Activated CD4-positive, alpha-beta T cell treated with anti-CD3 and anti-CD28 coated beads for 36 hours (primary cell): ENCODE measurements at regions of chr17 and their contacts with region 1.

Region 1: DNA sequence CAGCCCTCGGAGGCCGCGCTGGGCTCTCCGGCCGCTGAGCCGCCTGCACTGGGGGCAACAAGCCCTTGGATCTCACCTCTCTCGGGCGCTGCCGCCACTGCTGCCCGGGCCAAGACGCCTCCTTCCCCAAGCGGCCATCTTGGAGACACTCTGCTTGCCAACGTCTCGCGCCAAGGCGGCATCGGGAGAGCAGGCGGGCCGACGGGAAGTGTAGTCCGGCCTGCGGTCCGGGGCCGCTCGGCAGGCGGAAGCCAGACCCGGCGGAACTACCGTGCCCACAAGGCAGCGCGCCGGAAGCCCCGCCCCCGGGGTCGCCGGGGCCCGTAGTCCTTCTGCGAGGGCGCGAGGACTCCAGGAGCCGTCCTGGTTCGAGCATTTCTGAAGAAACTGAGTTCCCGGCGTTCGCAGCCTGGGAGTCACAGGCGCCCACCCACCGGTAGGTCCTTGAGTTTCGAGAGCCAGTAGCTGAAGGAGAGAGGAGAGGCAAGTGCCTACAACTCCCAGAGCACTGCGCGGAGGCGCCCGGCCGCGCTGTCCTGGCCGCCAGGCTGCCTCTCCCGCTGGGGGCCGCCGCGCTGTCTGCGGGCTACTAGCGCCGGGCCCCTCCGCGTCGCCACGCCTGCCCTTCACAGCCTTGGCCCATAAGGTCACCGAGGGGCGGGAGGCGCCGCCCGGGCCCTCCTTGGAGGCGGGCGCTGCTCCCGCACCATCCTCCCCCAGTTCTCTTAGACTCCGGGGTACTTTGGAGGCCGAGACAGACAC is at the start of gene TMEM11:
- DNase-seq: peak; percentile 98
- ATAC-seq: peak; percentile 96
- H3K4me3 Mint-ChIP-seq: peak within 1 kb of the TSS; percentile 82
- H3K27ac Mint-ChIP-seq: peak within 1 kb of the TSS; percentile 93
- H3K4me1 Mint-ChIP-seq: peaks cover 70% of the 10 kb centered on the region
- H3K27me3 Mint-ChIP-seq: no peaks in the 10 kb centered on the region
- total RNA-seq, gene TMEM11: 28.9 to 40.4 TPM

Region 2: GRCh38 chr17:21043286-21044232 is 170.6 kb before region 1 on chr17:
- CTCF ChIA-PET with region 1: no interaction called
- POLR2A ChIA-PET with region 1: interaction called, 3 read pairs
- intact Hi-C with region 1: loop called (anchors 1 kb)
- DNase-seq: peak; percentile 99
- ATAC-seq: peak; percentile 88
- H3K4me3 Mint-ChIP-seq: peak overlapping the region; percentile 76
- H3K27ac Mint-ChIP-seq: peak overlapping the region; percentile 95
- H3K4me1 Mint-ChIP-seq: peaks cover 21% of the 10 kb centered on the region
- H3K27me3 Mint-ChIP-seq: no peaks in the 10 kb centered on the region

Region 3: DNA sequence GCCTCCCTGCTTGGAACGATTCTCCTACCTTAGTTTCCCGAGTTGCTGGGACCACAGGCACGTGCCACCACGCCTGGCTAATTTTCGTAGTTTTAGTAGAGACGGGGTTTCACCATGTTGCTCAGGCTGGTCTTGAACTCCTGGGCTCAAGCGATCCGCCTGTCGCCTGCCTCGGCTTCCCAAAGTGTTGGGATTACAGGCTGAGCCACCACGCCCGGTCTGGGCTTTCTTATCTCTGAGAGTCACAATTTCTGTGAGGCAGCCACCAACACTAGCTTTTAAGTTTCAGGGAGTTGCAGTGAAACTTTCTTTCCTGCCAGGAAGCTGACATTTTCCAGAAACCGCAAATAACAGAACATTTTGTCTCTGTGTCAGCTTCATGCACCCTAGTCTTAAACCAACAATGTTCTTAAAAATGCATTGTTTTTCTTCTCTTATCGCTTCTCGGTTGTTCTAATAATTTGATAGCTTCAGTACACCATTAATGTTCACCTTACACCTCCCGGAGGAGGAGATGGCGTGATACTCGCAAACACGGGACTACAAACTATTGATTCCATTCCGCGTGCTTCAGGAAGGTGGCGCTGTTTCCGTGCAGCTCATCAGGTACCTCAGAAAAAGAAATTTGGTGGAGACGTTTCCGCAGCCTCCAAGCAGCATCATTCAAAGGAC is 94.8 kb before region 1 on chr17:
- CTCF ChIA-PET with region 1: interaction called, 6 read pairs
- POLR2A ChIA-PET with region 1: interaction called, 4 read pairs
- intact Hi-C with region 1: loop called (anchors 2 kb)
- DNase-seq: peak; percentile 83
- ATAC-seq: peak; percentile 95
- H3K4me3 Mint-ChIP-seq: peak overlapping the region; percentile 2
- H3K27ac Mint-ChIP-seq: peak overlapping the region; percentile 12
- H3K4me1 Mint-ChIP-seq: peaks cover 7% of the 10 kb centered on the region
- H3K27me3 Mint-ChIP-seq: peaks cover 2% of the 10 kb centered on the region

Region 4: DNA sequence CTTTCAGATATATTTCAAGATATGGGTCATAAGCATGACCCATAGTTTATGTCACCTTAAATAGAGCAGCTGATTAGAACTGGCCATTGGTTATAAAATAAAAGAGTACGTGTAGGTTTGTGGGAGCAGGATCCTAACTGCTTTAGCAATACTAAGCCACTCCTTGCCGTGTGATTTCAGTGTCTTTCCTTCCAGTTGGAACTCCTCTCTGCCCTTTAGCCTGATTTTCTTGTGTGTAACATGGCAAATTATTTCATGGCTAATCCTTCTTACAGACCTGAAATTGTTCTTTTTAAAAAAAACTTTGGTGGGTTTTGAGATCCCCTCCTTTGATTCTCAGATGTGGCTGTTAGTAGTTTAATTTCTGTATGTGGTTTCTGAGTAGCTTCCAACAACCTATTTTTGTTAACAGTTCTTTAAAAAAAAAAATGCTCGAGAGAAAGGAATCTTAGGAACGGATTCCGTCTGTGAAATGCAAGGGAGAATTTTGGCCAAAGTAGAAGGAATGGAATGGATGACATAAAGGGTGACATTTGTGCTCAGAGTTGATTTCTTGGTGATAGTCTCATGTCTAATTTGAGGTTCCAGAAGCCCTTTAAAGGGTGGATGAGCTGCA is 47.5 kb before region 1 on chr17:
- CTCF ChIA-PET with region 1: no interaction called
- POLR2A ChIA-PET with region 1: no interaction called
- intact Hi-C with region 1: loop called in 1 of 2 experiments (anchors 5 kb)
- DNase-seq: no peak
- ATAC-seq: no peak
- H3K4me3 Mint-ChIP-seq: no peak overlapping the region
- H3K27ac Mint-ChIP-seq: no peak overlapping the region
- H3K4me1 Mint-ChIP-seq: peaks cover 23% of the 10 kb centered on the region
- H3K27me3 Mint-ChIP-seq: no peaks in the 10 kb centered on the region

Region 5: DNA sequence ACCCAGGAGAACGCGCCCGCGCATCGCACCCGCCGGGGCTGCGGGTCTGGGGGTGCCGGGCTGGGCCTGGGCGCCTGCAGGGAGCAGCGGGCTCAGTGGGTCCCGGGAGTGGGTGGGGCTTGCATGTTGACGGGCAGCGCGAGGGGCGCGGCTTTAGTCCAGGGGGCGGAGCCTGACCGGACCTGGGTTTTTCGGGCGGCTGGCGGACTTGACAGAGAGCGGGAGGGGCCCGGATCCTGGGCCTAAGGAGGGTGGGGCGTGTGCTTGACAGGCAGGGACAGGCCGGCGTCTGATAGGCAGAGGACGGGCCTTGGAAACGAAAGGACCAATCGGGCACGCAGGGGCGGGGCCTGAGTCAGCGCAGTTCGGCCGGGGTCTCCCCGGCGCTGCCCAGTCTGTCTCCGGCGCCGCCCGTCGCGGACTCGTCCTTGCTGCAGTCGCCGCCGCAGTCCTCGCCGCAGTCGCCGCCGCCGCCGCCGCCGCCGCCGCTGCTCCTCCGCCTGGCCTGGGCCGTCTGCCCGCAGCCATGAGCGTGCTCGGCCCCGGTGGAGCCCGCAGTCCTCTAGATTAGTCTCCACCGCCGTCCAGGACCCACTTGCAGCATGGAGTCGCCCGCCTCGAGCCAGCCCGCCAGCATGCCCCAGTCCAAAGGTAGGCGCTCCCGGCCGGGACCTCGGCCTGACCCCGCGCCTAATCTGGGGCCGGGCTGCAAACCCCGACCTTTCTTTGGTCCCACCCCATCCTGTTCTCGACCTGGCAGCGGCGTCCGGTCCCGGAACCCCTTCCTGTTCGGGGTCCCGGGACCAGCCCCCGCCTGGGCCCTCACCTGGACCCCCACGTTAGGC is 70.3 kb after region 1 on chr17 and contains the start of gene MAP2K3:
- CTCF ChIA-PET with region 1: interaction called, 3 read pairs
- POLR2A ChIA-PET with region 1: no interaction called
- intact Hi-C with region 1: loop called (anchors 1 kb)
- DNase-seq: peak; percentile 99
- ATAC-seq: peak; percentile 76
- H3K4me3 Mint-ChIP-seq: peak within 1 kb of the TSS; percentile 98
- H3K27ac Mint-ChIP-seq: peak within 1 kb of the TSS; percentile 94
- H3K4me1 Mint-ChIP-seq: peaks cover 57% of the 10 kb centered on the region
- H3K27me3 Mint-ChIP-seq: no peaks in the 10 kb centered on the region
- total RNA-seq, gene MAP2K3: 122 to 123 TPM

Region 6: DNA sequence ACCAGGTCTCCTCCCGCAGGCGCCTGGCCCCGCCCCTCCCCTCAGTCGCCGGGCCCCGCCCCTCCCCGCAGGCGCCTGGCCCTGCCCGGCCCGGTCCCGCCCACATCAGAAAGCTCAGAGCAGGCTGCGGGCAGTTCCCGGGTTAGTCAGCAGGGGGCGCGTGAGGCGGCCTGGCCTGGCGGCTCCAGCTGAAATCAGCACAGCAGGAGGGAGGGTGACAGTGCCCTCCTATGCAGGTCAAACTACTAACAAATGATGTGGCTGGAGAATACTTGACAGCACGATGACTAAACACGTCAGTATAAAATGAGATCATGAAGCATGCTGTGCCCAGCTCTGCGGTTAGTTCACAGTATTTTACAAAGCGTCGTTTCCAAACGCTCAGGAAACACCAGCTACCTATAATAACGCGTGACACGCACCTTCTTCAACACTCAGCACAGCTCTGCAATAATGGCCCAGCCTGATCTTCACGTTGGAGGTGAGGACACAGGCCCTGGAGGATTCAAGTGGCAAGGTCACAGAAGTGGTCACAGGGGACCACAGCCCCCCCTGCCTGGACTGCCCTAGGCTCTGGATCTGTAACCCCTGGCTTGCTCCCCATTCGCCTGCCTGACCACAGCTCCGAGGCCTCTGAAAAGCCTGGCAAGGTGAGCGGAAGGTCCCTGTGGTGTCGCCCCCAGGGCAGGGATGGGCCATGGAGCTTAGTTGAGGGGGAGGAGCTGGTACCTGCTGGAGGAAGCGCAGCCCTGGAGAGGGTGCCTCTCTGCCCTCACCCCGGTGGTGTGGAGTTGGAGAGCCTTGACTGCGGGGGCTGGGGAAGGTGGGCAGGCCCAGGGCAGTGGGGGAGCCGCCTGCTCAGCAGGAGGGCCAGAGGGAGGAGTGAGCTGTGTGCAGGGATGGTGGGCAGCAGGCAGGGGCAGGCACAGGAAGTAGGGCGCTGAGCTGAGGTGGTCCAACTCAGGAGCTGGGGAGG is 243.1 kb after region 1 on chr17:
- CTCF ChIA-PET with region 1: no interaction called
- POLR2A ChIA-PET with region 1: no interaction called
- intact Hi-C with region 1: loop called in 1 of 2 experiments (anchors 5 kb)
- DNase-seq: peak; percentile 96
- ATAC-seq: peak; percentile 92
- H3K4me3 Mint-ChIP-seq: no peak overlapping the region
- H3K27ac Mint-ChIP-seq: peak overlapping the region; percentile 67
- H3K4me1 Mint-ChIP-seq: peaks cover 21% of the 10 kb centered on the region
- H3K27me3 Mint-ChIP-seq: peaks cover 15% of the 10 kb centered on the region

Region 7: DNA sequence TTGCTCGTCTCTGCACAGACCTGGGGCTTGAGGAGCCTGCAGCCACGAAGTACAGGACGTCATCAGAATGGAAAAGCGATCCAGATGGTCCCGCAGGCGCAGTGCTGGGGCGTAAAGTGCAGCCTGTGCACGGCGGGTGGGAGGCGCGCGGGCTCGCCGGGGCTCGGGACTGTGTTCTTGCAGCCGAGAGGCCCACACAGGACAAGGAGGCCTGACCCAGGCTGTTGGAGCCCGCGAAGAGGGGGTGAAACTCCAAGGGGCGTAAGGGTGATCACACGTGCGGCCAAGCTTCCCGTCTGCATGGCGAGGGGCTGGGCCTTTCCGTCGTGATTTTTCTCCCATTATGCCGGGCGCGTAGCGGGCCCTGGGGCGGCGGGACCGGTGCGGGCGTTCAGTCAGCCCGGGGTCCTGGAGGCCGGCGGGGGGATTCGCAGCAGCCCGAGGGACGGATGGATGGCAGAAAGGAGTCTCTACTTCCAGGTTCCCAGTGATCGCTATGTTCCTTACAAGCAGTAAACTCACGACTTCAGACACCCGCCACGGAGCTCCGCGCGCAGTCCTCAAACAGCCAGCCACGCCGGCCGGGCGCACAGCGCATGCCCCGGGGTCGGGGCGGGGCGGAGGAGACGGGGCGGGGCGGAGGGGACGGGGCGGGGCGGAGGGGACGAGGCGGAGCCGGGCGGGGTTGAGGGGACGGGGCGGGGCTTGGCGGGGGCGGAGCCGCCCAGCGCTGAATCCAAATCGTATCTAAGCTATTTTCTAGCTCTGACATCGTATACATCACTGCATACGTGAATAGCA is 337.1 kb after region 1 on chr17:
- CTCF ChIA-PET with region 1: no interaction called
- POLR2A ChIA-PET with region 1: no interaction called
- intact Hi-C with region 1: loop called in 1 of 2 experiments (anchors 1 kb)
- DNase-seq: peak; percentile 91
- ATAC-seq: peak; percentile 84
- H3K4me3 Mint-ChIP-seq: peak overlapping the region; percentile 72
- H3K27ac Mint-ChIP-seq: peak overlapping the region; percentile 85
- H3K4me1 Mint-ChIP-seq: peaks cover 30% of the 10 kb centered on the region
- H3K27me3 Mint-ChIP-seq: peaks cover 4% of the 10 kb centered on the region